ENCODE measurements at regions of chr11 and their contacts with region 1.

Region 1: DNA sequence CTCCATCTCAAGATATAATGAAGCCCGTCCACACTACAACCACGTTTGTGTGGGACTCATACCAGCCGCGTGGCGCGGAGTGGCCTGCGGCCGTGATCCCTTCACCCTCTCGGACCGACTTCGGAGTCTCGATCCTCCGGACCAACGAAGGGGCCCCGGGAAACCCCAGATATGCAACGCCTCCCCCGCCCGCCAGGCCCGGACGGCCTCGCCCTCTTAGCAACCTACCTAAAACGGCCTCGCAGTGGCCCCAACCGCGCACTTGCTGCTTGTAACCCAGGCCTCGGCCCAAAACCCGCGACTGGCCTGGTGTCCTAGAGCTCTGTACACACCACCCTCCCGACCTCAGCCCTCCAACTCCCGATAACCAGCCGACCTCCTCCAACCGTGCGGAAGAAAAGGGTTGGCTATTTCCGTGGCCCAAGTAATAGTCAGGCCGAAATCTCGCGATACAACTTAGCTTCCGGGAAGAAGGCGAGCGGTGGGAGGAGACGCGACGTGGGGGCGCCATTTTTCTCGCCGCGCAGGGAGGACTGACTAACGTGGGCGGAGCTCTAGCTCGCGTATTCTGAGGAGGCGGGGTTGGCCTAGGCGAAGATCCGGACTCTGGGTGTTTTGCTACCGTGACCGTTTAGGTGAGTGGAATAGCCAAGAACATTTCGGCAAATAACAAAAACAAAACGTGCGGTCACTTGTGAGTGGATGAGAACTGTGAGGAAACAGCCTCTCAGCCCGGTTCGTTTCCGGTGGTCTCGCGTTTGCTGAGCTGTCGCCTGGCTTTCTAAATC is at the starts of genes C11orf54 and TAF1D:
- DNase-seq: peak; percentile 100
- H3K4me3 ChIP-seq: peak within 1 kb of the TSS; percentile 64
- H3K27ac ChIP-seq: peak within 1 kb of the TSS; percentile 92
- H3K4me1 ChIP-seq: peaks cover 24% of the 10 kb centered on the region
- H3K27me3 ChIP-seq: no peaks in the 10 kb centered on the region
- CTCF ChIP-seq: no peak
- total RNA-seq, gene C11orf54: 24.3 and 26.2 TPM in 2 replicates
- total RNA-seq, gene TAF1D: 222 and 275 TPM in 2 replicates

Region 2: DNA sequence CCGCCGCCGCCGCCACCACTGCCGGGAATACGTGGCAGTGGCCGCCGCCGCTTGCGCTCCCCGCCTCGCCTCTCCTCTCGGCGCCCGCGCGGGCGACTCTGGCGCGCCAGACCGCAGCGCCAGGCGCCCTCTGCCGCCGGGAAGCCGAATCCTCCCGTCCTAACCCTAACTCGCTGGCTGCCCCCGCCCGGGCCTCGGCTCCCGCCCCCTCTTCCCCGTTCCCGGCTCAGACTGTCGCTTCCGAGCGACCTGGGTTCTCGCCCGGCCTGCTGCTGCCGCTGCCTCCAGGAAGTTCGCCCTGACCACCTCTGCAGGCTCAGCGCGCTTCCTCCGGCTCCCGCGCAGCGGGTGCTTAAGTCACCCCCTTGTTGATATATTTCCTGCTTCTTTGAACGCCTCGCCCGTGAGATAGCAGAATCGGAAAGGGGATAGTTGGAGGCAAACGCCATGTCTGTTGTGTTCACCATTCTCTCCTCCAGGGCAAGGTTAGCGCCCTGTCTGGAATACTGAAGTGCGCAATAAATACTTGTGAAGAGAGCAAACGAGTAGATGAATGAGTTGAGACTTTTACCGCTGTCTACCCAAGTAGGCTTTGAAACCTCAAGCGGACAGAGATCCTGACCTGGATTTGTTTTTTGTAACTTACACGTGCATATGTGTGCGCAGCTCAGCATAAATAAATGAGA is 197.9 kb before region 1 on chr11 and contains the start of gene SMCO4:
- CTCF ChIA-PET with region 1: no interaction called
- POLR2A ChIA-PET with region 1: no interaction called
- intact Hi-C with region 1: no loop called
- DNase-seq: peak; percentile 91
- H3K4me3 ChIP-seq: peak within 1 kb of the TSS; percentile 67
- H3K27ac ChIP-seq: no peak within 1 kb of the TSS
- H3K4me1 ChIP-seq: no peaks in the 10 kb centered on the region
- H3K27me3 ChIP-seq: no peaks in the 10 kb centered on the region
- CTCF ChIP-seq: peak; percentile 70
- total RNA-seq, gene SMCO4: 9.3 and 11.9 TPM in 2 replicates

Region 3: GRCh38 chr11:93727985-93728791 is 13.1 kb before region 1 on chr11:
- CTCF ChIA-PET with region 1: no interaction called
- POLR2A ChIA-PET with region 1: interaction called, 25 read pairs
- intact Hi-C with region 1: no loop called
- DNase-seq: no peak
- H3K4me3 ChIP-seq: no peak overlapping the region
- H3K27ac ChIP-seq: peak overlapping the region; percentile 39
- H3K4me1 ChIP-seq: no peaks in the 10 kb centered on the region
- H3K27me3 ChIP-seq: no peaks in the 10 kb centered on the region
- CTCF ChIP-seq: no peak

Region 4: GRCh38 chr11:93784152-93784934 is 43.1 kb after region 1 on chr11 and contains the start of gene MED17:
- CTCF ChIA-PET with region 1: interaction called, 9 read pairs
- POLR2A ChIA-PET with region 1: interaction called, 10 read pairs
- intact Hi-C with region 1: no loop called
- DNase-seq: peak; percentile 99
- H3K4me3 ChIP-seq: peak within 1 kb of the TSS; percentile 83
- H3K27ac ChIP-seq: peak within 1 kb of the TSS; percentile 94
- H3K4me1 ChIP-seq: peaks cover 20% of the 10 kb centered on the region
- H3K27me3 ChIP-seq: no peaks in the 10 kb centered on the region
- CTCF ChIP-seq: peak; percentile 53
- total RNA-seq, gene MED17: 63.4 and 67.9 TPM in 2 replicates

Region 5: GRCh38 chr11:93791493-93791892 is 50.2 kb after region 1 on chr11:
- CTCF ChIA-PET with region 1: no interaction called
- POLR2A ChIA-PET with region 1: interaction called, 12 read pairs
- intact Hi-C with region 1: no loop called
- DNase-seq: no peak
- H3K4me3 ChIP-seq: no peak overlapping the region
- H3K27ac ChIP-seq: no peak overlapping the region
- H3K4me1 ChIP-seq: peaks cover 5% of the 10 kb centered on the region
- H3K27me3 ChIP-seq: no peaks in the 10 kb centered on the region
- CTCF ChIP-seq: no peak

Measured in A673 (cell line).